ENCODE measurements at regions of chr14 and their contacts with region 1.

Region 1: DNA sequence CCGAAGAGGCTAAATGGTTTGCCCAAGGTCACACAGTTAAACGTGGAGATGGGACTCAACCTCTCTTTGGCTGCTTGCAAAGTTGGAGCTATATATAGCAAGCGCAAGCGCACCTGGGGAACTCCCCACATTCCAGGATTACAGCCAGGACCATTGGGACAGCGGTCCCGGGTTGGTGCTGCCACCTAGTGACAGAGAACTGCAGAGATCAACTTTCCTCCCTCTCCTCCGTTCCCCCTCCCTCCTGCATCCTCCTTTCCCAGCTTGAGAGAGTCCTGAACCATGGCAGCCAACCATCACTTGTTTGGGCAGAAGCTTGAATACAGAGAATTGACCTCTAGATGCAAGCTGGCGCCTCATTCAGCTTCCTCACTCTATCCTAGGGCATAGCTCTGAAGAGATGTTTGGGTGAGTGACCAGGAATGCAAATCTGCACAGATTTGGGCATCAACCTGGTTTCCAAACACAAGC is 17.4 kb upstream of the FLVCR2 start:
- DNase-seq: peak in 7 of 9 experiments; percentile 25 to 74 (median 56)
- ATAC-seq: peak; percentile 36
- H3K4me3 ChIP-seq: no peak overlapping the region
- H3K4me3 Mint-ChIP-seq: no peak overlapping the region
- H3K27ac ChIP-seq: no peak overlapping the region
- H3K27ac Mint-ChIP-seq: no peak overlapping the region
- H3K4me1 ChIP-seq: peaks cover 8% of the 10 kb centered on the region
- H3K4me1 Mint-ChIP-seq: peaks cover 15% of the 10 kb centered on the region
- H3K27me3 ChIP-seq: no peaks in the 10 kb centered on the region
- H3K27me3 Mint-ChIP-seq: no peaks in the 10 kb centered on the region
- CTCF ChIP-seq: peak; percentile 51

Region 2: DNA sequence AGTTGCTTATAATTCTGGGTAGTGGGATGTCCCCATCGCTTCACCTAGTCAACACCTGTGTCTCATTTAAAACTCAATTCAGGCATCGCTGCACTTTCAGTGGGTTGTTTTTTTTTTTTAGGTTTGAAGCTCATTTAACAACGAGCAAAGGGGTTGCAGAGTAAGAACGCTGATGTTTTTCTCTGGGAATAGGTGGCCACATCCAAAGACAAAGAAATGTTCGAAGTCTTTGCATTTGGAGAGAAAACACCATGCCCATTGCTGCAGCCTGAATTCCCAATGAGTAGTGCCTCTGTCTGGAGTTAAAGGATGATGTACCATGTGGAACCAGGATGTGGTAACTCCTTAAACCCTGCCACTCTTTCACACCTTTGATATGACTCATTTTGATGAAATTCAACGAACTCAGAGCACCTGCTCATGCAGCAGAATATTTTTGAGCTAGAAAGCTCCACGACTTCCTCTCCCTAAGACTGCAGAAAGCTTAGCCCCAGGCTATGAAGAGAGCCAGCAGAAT is 73.8 kb before region 1 on chr14:
- CTCF ChIA-PET with region 1: interaction called, 24 read pairs
- POLR2A ChIA-PET with region 1: interaction called, 3 read pairs
- intact Hi-C with region 1: loop called (anchors 2 to 5 kb)
- DNase-seq: peak in 3 of 9 experiments; percentile 45 to 64 (median 47)
- ATAC-seq: peak; percentile 70
- H3K4me3 ChIP-seq: no peak overlapping the region
- H3K4me3 Mint-ChIP-seq: no peak overlapping the region
- H3K27ac ChIP-seq: no peak overlapping the region
- H3K27ac Mint-ChIP-seq: peak overlapping the region; percentile 15
- H3K4me1 ChIP-seq: peaks cover 4% of the 10 kb centered on the region
- H3K4me1 Mint-ChIP-seq: peaks cover 11% of the 10 kb centered on the region
- H3K27me3 ChIP-seq: no peaks in the 10 kb centered on the region
- H3K27me3 Mint-ChIP-seq: no peaks in the 10 kb centered on the region
- CTCF ChIP-seq: no peak

Region 3: DNA sequence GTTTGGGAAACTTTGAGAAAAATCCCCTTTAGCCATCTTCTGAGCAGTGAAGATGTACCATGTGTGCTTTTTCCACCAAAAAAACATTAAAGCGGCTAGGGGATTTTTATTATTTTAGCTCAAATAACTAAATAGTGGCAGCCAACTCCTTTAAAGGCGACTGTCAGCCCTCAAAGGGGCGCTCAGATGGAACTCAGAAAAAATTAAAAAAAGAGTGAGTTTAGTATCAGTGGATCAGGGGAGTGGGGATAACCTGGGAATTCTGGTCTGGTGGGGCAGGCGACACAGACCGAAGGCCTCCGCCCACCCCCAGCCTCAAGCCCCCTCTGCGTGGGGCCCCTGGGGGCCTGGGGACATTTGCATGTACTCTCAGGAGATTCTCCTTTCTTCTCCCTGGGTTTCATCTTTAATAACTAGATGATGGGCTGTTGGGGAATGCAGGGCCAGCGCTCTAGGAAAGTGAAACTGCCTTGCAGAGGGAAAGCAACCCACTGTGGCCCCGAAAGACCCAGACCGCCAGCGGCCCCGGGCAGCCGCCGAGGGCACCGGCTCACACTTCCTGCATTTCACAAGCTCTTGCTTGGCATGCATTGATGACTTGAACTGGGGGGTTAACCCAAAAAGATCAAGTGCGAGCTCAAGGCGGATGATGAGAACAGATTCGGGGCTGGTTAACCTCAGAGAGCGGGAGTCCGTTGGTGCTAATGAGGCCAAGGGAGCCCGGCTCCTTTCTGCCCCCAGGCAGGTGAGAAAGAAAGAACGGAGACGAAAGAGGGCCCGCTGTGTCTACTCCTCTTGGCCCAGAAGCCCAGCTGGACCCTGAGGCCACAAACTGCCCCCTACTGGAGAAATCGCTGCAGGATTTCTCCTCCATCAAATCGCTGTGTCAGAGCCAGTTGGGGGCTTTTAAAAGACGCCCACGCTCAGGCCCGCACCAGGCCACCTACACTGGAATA is 46.0 kb before region 1 on chr14:
- CTCF ChIA-PET with region 1: interaction called, 16 read pairs
- POLR2A ChIA-PET with region 1: interaction called, 3 read pairs
- intact Hi-C with region 1: loop called in 1 of 2 experiments (anchors 2 kb)
- DNase-seq: peak; percentile 19 to 83 (median 49)
- ATAC-seq: peak; percentile 69
- H3K4me3 ChIP-seq: peak overlapping the region; percentile 34 to 37
- H3K4me3 Mint-ChIP-seq: peak overlapping the region; percentile 83
- H3K27ac ChIP-seq: peak overlapping the region; percentile 20 to 65
- H3K27ac Mint-ChIP-seq: peak overlapping the region; percentile 89
- H3K4me1 ChIP-seq: peaks cover 23% of the 10 kb centered on the region
- H3K4me1 Mint-ChIP-seq: peaks cover 27% of the 10 kb centered on the region
- H3K27me3 ChIP-seq: no peaks in the 10 kb centered on the region
- H3K27me3 Mint-ChIP-seq: no peaks in the 10 kb centered on the region
- CTCF ChIP-seq: no peak

Region 4: GRCh38 chr14:75549169-75549568 is 11.8 kb before region 1 on chr14:
- CTCF ChIA-PET with region 1: interaction called, 34 read pairs
- POLR2A ChIA-PET with region 1: no interaction called
- intact Hi-C with region 1: no loop called
- DNase-seq: peak in 1 of 9 experiments; percentile 28
- ATAC-seq: no peak
- H3K4me3 ChIP-seq: no peak overlapping the region
- H3K4me3 Mint-ChIP-seq: no peak overlapping the region
- H3K27ac ChIP-seq: peak overlapping the region in 1 of 2 experiments; percentile 46
- H3K27ac Mint-ChIP-seq: peak overlapping the region; percentile 27
- H3K4me1 ChIP-seq: peaks cover 6% of the 10 kb centered on the region
- H3K4me1 Mint-ChIP-seq: peaks cover 21% of the 10 kb centered on the region
- H3K27me3 ChIP-seq: no peaks in the 10 kb centered on the region
- H3K27me3 Mint-ChIP-seq: no peaks in the 10 kb centered on the region
- CTCF ChIP-seq: no peak

Region 5: GRCh38 chr14:75654127-75654732 is 93.2 kb after region 1 on chr14:
- CTCF ChIA-PET with region 1: interaction called, 12 read pairs
- POLR2A ChIA-PET with region 1: no interaction called
- intact Hi-C with region 1: no loop called
- DNase-seq: peak; percentile 59 to 86 (median 78)
- ATAC-seq: peak; percentile 99
- H3K4me3 ChIP-seq: no peak overlapping the region
- H3K4me3 Mint-ChIP-seq: no peak overlapping the region
- H3K27ac ChIP-seq: no peak overlapping the region
- H3K27ac Mint-ChIP-seq: no peak overlapping the region
- H3K4me1 ChIP-seq: no peaks in the 10 kb centered on the region
- H3K4me1 Mint-ChIP-seq: peaks cover 14% of the 10 kb centered on the region
- H3K27me3 ChIP-seq: no peaks in the 10 kb centered on the region
- H3K27me3 Mint-ChIP-seq: no peaks in the 10 kb centered on the region
- CTCF ChIP-seq: peak; percentile 92

Measured in CD8-positive, alpha-beta T cell (primary cell).